Posterior cingulate gyrus (tissue), 11 donors: ENCODE measurements at regions of chr9 and their contacts with region 1.

Region 1: DNA sequence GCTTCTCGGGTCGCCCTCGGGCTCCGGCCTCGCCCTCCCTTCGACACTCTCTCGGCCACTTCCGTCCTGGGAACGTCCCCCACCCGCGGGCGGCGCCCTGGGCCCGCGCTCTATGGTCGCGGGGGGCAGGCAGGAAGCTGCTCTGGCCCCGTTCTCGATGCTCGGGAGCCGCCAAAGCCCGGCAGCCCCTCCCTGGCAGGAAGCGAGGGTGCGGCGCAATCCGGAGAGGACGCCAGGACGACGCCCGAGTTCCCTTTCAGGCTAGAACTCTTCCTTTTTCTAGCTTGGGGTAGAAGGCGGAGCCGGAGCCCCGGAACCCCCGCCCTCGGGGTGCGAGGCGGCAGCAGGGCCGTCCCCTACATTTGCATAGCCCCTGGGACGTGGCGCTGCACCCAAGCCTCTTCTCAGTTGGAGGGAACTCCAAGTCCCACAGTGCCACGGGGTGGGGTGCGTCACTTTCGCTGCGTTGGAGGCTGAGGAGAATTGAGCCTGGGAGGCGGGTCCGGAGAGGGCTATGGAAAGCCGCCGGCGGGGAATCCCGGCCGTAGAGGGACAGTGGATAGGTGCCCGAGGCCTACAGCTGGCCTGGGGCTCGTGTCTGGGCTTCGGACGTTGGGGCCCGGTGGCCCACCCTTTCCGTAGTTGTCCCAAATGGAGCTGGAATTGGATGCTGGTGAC is at the starts of genes CREB3 and TLN1:
- DNase-seq: peak; percentile 90 to 100 (median 98)

Region 2: DNA sequence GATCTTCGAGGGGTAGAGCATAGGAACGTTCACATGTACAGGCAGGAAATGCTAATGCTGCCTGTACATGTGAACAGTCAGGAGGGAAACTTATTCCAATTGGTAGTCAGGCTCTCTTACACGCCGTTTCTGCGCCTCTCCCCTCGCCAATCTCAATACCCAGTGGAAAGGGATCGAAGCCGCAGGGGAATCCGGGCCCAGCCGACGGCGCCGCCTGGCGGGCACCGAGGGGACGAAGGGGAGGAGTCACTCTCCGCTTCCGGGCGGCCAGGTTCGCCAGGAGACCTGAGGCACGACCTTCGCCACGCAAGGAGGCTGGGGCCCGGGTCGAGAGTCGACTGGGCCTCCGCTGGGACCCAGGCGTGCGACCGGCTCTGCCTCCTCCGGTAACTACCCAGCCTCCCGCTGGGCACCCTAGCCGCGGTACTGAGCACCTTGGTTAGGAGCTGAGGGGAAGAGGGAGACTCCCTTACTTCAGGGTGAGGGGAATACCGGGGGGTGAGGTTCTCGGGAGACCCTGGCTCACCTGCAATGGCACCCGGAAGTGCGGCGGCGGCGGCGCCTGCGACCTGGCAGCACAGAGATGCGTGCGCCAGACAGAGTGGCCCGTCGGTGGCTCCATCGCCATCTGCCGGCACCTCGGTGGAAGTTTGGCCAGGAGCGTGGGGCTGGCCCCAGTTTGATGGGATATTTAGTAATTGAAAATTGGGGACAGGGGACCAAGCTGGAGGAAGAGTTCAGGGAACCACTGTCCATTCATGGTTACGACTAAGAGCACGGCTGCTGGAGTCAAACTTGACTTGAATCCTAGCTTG is 636.0 kb before region 1 on chr9 and contains the start of gene PIGO:
- intact Hi-C with region 1: loop called (anchors 10 kb)
- DNase-seq: peak; percentile 74 to 98 (median 88)

Region 3: GRCh38 chr9:35603987-35604577 is 128.2 kb before region 1 on chr9:
- intact Hi-C with region 1: loop called (anchors 2 kb)
- DNase-seq: peak; percentile 98 to 100 (median 99)

Region 4: GRCh38 chr9:35657546-35658136 is 74.6 kb before region 1 on chr9 and contains the start of gene RMRP:
- intact Hi-C with region 1: loop called (anchors 2 kb)
- DNase-seq: peak; percentile 88 to 100 (median 98)

Region 5: GRCh38 chr9:35690431-35691333 is 41.6 kb before region 1 on chr9:
- intact Hi-C with region 1: loop called (anchors 5 kb)
- DNase-seq: peak in 8 of 10 donors; percentile 30 to 89 (median 42)

Region 6: DNA sequence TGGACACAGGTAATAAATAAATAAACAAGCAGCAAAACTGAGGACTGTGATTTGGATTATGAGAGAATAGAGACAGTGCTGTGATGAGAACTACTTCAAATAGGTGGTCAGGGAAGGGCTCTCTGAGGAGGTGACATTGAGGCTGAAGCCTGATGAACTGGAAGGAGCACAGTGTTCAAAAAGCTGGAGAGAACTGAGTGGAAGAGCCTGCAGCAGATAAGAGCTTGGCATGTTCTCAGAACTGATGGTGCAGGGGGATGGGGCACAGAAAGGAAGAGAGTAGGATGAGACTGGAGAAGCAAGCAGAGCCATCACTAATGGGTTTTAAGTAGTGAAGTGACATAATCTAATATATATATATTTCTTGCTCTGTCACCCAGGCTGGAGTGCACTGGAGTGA is 31.3 kb before region 1 on chr9:
- intact Hi-C with region 1: no loop called
- DNase-seq: no peak

Region 7: DNA sequence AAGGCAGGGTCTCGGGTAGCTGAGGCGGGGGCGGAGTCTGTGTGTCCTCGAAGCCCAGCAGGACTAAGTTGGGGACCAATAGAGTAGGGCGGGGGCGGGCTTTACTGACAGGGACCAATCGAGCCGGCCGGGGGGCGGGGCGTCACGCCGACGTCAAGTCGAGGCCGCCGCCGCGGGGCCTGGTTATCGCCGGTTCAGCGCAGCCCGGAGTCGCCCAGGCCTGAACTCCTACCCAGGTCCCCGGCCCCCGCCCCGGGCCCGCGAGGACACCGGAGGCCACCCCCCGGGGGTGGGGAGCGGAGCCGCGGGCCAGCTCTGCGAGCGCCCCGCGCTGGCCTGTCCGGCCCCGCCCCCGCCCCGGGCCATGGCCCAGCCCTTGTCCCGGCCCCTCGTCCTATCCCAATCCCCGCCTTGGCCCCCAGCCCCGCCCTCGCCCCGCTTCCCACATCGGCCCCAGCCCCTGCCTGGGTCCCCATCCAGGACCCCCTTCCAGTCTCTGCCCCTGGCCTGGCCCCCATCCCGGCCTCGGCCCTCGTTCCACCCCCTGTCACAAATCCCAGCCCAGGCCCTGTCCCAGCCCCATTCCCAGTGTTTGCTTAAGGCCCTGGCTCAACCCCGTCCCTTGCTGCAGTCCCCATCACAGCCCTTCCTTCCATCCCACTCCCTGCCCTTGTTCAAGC is 97.0 kb after region 1 on chr9 and contains the start of gene TMEM8B:
- intact Hi-C with region 1: loop called (anchors 5 kb)
- DNase-seq: peak; percentile 91 to 99 (median 96)